ENCODE measurements at regions of chr6 and their contacts with region 1.

Region 1: DNA sequence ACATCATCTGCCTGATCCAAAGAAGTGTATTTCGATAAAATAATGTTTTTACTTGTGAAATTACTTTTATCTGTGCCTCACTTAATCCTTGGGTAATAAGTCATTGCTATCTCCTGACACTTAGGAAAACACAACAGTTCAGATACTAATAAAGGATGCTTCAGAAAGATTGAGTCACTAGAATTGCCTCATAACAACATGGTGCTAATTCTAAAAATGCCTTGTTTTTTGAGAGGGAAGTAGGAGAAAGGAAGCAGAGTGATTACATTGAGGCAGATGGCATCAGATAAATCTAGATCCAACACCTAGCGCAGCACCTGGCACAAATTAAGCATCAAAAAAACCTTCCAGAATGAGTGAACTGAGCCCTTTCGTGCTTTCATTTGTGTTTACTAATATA is 69.0 kb downstream of the NCOA7 start:
- DNase-seq: no peak

Region 2: DNA sequence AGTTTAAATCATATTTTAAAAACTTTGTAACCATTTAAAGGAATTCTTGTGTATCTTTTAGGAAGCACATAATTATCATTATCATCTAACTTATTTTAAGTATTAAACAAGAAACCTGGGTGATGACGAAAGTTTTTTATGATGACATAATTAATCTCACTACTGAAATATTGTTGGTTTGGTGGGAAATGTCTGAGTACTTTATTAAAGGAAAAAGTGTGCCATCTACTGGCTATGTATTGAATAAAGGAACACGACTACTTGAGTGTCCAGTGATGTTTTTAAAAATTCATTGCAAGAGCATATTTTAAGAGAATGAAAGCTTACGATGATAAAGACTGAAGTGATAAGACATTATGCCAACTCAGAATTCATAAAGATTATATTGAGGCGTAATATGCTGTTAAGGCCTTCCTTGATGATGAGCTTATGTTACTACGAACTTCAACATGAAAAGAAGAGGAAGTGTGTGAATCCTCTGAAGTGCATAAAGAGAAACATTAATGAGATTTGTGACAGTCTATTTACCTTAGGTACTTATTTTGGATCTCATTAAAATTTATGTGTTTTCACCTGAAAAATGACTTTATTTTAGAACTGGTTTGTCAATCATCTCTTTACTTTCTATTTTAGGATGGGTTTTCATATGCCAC is 114.6 kb after region 1 on chr6:
- intact Hi-C with region 1: loop called (anchors 5 kb)
- DNase-seq: no peak